Cardiac septum (tissue), 1 donor: ENCODE measurements at regions of chr7 and their contacts with region 1.

Region 1: DNA sequence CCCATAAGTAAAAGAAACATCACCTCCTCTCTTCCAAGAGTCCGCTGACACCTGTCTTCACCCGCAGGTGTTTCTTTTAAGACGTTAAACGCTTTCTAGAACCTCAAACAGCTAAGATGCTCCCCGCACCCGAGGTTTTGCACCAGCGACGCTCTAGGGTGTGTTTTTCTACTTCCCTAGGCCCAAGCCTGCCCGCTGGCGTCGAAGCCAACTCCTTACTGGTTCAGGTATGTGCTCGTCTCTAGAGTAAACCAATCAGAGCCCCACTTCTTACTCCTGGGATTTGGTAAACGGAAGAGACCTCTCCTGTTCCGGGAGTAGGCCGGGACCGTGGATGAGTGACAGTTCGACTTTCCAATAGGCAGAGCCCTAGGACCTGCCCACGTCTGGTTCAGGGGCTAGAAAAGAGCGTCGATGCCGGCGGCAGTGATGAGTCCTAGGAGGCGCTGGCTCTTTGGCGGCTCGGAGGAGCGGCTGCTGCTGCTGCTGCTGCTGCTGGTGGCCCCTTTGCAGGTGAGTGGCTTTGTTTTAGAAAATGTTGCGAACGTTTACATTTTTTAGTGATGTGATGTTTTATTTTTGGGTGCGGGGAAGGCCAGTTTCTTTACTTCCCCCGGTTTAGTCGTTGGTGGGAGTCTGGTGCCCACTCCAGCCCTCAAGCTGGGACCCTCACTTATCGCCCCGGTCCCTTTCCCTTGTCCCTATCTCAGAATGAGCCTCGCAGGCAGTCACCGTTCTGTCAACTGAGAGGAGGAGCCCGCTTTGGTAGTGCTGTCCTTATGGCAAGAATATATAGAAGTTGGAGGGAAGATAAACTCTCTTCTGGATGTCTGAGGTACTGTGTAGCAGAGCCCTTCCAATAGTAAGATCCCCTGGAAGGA is at the start of gene BPGM:
- DNase-seq: peak; percentile 99
- total RNA-seq, gene BPGM: 13.2 TPM

Region 2: DNA sequence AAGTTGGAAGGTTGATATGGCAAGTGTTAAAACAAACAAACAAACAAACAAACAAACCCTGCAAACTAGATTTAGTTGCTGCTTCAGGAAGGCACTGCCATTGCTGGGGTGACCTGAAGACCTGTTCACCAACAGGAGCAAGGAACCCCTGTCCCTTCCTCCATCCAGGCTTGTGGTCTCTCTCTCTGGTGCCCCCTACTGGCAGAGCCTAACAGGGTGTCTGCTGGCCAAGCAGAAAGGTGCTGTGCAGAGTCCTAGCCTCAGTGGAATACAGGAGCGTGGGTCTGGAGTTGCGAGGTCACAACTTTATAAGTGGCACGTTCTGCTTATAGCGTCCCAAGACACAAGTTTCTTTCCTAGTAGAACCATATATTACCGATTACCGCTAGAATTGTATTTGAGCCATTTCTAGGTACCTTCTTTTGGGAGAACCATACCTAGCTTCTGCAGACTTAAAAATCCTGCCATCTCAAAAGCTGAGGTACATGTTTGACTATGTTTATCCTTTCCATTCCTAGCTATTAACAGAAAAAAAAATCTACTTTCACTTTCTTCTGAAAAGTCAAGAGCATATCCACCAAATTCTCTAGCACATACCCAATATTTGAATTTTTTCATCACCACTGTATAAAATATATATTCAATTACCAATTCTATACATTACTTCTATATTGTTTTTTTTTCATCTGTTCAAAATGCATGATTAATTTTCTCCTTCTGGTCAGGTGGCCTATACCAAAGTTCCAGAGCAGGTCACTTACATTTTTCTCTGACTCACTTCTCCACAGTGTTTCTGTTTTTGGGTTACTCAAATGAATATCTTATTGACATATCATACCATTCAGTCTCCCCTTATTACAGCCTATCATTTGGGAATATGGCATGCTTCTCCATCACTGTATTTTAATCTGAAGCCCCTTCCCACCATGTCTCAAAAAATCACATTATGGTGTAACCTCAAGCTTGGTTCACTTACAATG is 103.7 kb after region 1 on chr7:
- intact Hi-C with region 1: loop called (anchors 5 kb)
- DNase-seq: no peak